Activated naive CD4-positive, alpha-beta T cell treated with anti-CD3 and anti-CD28 coated beads for 36 hours (primary cell): ENCODE measurements at regions of chr3 and their contacts with region 1.

Region 1: DNA sequence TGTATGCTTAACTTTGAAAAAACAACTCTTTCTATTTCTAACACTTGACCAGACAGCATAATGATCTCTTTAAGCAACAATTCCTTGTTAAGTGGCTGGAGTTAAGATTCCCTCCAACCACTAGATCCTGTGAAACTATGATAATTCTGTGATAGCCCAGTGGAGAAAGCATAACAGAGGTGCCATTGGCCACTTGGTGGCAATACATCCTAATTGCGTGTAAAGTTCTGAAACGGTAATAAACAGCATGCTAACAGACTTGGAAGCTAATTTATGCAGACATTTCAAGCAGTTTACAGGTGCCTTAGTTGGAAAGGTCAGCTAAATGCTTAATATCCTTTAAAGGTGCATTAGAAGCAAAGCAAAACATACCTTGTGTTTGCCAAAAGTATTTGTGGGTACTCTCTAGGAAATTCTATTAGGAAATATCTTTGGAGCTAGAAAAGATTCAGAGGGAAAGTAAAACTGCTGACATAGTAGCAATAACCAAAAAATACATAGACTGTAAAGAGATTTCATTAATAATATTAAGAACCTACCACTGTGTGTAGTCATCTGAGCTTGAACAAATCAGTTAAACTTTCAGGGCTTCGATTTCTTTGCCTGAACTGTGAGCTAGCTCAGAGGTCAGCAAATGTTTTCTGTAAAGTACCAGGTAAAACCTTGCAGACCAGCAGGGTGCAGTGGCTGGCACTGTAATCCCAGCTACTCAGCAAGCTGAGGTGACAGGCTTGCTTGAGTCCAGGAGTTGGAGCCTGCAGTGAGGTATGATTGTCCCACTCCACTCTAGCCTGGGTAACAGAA is 19.0 kb upstream of the CSTA start:
- DNase-seq: peak; percentile 32
- H3K4me3 Mint-ChIP-seq: no peak overlapping the region
- H3K27ac Mint-ChIP-seq: no peak overlapping the region
- H3K4me1 Mint-ChIP-seq: no peaks in the 10 kb centered on the region
- H3K27me3 Mint-ChIP-seq: peaks cover 1% of the 10 kb centered on the region

Region 2: GRCh38 chr3:122132949-122133540 is 173.0 kb before region 1 on chr3:
- CTCF ChIA-PET with region 1: no interaction called
- intact Hi-C with region 1: no loop called
- DNase-seq: no peak
- H3K4me3 Mint-ChIP-seq: no peak overlapping the region
- H3K27ac Mint-ChIP-seq: no peak overlapping the region
- H3K4me1 Mint-ChIP-seq: no peaks in the 10 kb centered on the region
- H3K27me3 Mint-ChIP-seq: peaks cover 12% of the 10 kb centered on the region

Region 3: GRCh38 chr3:122356415-122356814 is 50.4 kb after region 1 on chr3:
- CTCF ChIA-PET with region 1: interaction called, 8 read pairs
- intact Hi-C with region 1: loop called (anchors 1 kb)
- DNase-seq: peak; percentile 63
- H3K4me3 Mint-ChIP-seq: no peak overlapping the region
- H3K27ac Mint-ChIP-seq: no peak overlapping the region
- H3K4me1 Mint-ChIP-seq: peaks cover 2% of the 10 kb centered on the region
- H3K27me3 Mint-ChIP-seq: no peaks in the 10 kb centered on the region